ENCODE measurements at regions of chr5 and their contacts with region 1.

Region 1: DNA sequence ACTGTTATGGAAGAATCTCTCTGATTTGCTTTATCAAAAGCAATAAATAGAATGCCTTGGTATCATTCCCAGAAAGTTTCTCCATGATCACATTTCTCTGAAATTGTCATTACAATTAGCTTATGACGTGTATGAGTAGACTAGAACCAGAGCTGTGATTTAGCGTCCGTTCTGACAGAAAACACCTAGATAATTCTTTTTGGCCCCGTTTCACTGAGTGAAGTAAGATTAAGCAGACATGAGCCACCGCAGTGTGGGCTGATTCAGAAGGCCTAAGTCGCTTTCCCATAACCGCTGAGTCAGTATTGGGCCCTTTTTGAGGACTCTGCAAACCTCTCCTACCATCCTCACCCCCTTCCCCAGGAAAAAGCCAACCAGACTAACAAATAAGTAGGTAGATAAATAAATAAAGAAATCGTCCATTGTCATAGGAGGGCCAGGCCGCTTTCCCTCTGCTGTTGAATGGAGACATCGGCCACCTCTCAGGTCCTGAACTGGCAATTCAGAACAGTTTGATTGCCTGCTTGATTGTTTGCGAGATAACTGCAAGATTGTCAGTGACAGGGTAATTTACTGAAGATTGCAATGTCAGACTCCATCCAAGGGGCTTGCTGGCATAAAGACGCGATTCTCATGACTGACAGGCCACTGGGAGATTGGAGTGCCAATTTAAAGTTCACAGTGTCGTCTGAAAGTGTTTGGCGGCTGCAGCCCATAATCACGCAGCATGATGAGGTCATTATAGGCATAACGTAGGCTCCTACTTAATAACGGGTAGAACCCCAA is 105.0 kb upstream of the WWC1 start:
- DNase-seq: no peak
- ATAC-seq: peak; percentile 64

Region 2: DNA sequence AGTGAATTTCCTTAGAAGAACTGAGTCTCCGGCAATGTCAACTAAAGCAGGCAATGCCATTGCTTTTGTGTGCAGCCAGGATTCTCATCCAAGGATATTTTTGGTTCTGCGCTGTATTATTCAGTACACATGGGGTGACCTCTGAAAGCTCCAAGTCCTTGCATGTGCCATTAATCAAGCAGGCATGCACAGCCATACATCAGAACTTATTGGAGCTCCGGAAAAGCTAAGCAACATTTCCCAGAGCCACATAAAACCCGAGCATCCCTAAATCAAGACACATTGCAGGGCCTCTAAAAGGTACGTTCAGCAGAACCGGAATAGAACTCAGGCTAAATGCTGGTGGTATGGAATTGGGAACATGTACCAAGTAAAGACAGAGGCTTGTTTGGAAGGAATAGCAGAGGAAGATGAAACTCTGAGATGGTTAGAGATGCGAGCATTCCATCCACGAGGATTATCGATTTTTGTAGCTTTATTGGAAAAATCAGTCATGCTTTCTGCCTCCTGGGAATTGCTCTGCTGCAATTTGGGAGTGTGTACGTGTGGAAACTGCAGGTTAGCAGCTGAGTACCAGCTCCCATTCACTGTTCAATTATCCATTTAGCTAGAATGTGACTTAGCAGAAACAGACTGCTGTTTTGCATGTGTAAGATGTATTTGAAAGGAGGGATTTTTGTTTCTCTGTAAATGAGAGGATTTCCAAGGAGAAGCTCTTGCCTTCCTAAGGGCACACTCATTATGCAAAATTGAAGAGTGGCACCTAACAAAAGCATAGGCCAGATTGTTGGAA is 38.7 kb before region 1 on chr5:
- intact Hi-C with region 1: loop called (anchors 5 kb)
- DNase-seq: no peak
- ATAC-seq: peak; percentile 81

Measured in Right ventricle myocardium inferior (tissue), 1 donor.